ENCODE measurements at regions of chr1 and their contacts with region 1.

Region 1: DNA sequence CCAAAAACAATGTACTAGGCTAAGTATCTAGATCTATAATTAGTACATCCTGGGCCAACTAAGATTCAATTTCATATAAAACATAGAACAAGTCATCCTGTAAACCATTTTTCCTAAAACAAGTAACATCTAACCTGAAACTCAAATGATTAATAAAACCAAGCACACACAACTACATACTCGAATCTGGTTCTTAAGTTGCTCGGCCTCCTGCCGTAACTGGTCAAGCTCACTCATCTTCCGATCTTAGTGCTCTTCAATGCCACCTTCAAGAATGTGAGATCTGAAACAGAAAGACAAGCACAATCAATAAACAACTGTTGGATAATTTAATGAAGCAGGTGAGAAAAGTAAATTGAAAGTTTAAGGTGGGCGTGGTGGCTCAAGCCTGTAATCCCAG is 46.9 kb upstream of the NADK start:
- DNase-seq: no peak
- H3K4me3 ChIP-seq: no peak overlapping the region
- H3K27me3 ChIP-seq: no peaks in the 10 kb centered on the region
- CTCF ChIP-seq: no peak

Region 2: DNA sequence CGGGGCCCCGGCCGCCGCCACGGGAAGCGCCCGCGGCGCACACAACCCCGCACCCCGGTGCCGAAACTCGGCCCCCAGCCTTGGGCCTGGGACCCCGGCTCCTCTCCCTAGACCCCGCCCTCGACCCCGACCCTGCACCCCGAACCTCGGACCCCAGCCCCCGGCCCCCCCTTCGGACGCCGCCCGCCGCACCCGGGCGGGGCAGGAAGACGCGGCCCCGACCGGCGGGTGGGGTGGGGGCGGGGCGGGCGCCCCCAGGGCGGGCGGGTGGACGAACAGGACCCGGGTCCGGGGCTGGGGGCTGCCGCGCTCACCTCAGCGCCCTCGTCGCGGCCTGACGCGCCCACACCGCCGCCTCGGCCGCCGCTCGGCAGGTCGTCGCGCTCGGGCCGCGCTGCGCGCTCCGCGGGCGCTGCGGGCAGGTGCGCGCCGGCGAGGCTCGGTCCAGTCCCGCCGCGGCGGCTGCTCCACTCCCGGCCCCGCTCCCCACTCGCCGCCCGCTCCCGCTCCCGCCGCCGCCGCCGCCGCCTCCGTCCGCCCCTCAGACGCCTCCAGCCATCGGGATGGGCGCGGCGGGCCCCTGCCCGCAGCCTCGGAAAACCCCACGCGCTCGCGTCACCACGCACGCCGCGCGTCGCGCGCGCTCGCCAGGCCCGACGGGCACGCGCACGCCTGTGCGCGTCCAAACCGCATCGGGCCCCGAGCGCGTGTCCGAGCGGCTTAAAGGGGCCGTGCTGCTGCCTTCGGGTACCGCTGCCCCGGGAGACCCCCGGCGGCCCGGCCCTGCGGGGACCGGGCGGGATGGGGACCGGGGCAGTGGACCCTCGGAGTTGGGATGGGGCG is 65.5 kb after region 1 on chr1 and contains the start of gene GNB1:
- CTCF ChIA-PET with region 1: no interaction called
- POLR2A ChIA-PET with region 1: interaction called, 11 read pairs
- DNase-seq: no peak
- H3K4me3 ChIP-seq: peak within 1 kb of the TSS; percentile 89
- H3K27me3 ChIP-seq: no peaks in the 10 kb centered on the region
- CTCF ChIP-seq: no peak
- polyA plus RNA-seq, gene GNB1: 487 and 566 TPM in 2 replicates

Measured in BJ (cell line).